B cell (primary cell): ENCODE measurements at regions of chr7 and their contacts with region 1.

Region 1: DNA sequence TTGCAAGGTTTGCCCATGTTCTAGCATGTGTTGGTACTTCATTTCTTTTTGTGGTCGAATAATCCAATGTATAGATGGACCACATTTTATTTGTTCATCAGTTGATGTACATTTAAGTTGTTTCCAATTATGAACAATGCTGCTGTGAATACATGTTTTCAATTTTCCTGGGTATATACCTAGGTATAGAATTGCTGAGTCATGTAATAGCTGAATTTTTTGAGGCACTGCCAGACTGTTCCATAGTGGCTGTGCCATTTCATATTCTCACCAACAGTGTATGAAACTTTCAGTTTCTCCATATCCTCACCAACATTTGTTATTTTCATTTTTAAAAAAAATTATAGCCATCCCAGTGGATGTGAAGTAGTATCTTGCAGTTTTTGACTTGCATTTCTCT is 90.5 kb downstream of the EZH2 start:
- DNase-seq: no peak
- ATAC-seq: no peak
- H3K4me3 ChIP-seq: no peak overlapping the region
- H3K4me3 Mint-ChIP-seq: no peak overlapping the region
- H3K27ac ChIP-seq: no peak overlapping the region
- H3K27ac Mint-ChIP-seq: no peak overlapping the region
- H3K4me1 ChIP-seq: no peaks in the 10 kb centered on the region
- H3K4me1 Mint-ChIP-seq: no peaks in the 10 kb centered on the region
- H3K27me3 ChIP-seq: no peaks in the 10 kb centered on the region
- H3K27me3 Mint-ChIP-seq: no peaks in the 10 kb centered on the region
- CTCF ChIP-seq: no peak

Region 2: GRCh38 chr7:148747275-148747674 is 46.3 kb before region 1 on chr7:
- CTCF ChIA-PET with region 1: no interaction called
- POLR2A ChIA-PET with region 1: no interaction called
- intact Hi-C with region 1: loop called (anchors 10 kb)
- DNase-seq: peak; percentile 23
- ATAC-seq: no peak
- H3K4me3 ChIP-seq: no peak overlapping the region
- H3K4me3 Mint-ChIP-seq: no peak overlapping the region
- H3K27ac ChIP-seq: no peak overlapping the region
- H3K27ac Mint-ChIP-seq: no peak overlapping the region
- H3K4me1 ChIP-seq: no peaks in the 10 kb centered on the region
- H3K4me1 Mint-ChIP-seq: peaks cover 3% of the 10 kb centered on the region
- H3K27me3 ChIP-seq: no peaks in the 10 kb centered on the region
- H3K27me3 Mint-ChIP-seq: no peaks in the 10 kb centered on the region
- CTCF ChIP-seq: no peak

Region 3: GRCh38 chr7:148813890-148814289 is 20.3 kb after region 1 on chr7:
- CTCF ChIA-PET with region 1: no interaction called
- POLR2A ChIA-PET with region 1: no interaction called
- intact Hi-C with region 1: no loop called
- DNase-seq: no peak
- ATAC-seq: no peak
- H3K4me3 ChIP-seq: no peak overlapping the region
- H3K4me3 Mint-ChIP-seq: no peak overlapping the region
- H3K27ac ChIP-seq: no peak overlapping the region
- H3K27ac Mint-ChIP-seq: no peak overlapping the region
- H3K4me1 ChIP-seq: peaks cover 15 to 22% of the 10 kb centered on the region in 2 donors
- H3K4me1 Mint-ChIP-seq: peaks cover 35% of the 10 kb centered on the region
- H3K27me3 ChIP-seq: no peaks in the 10 kb centered on the region
- H3K27me3 Mint-ChIP-seq: no peaks in the 10 kb centered on the region
- CTCF ChIP-seq: no peak